Endothelial cell of umbilical vein (primary cell): ENCODE measurements at regions of chr17 and their contacts with region 1.

Region 1: GRCh38 chr17:42221937-42222745 is 27.8 kb upstream of the GHDC start:
- DNase-seq: peak; percentile 77
- H3K4me3 ChIP-seq: no peak overlapping the region
- H3K27ac ChIP-seq: no peak overlapping the region
- H3K4me1 ChIP-seq: peaks cover 1% of the 10 kb centered on the region
- H3K27me3 ChIP-seq: no peaks in the 10 kb centered on the region
- CTCF ChIP-seq: peak; percentile 78 to 86
- POLR2A ChIP-seq: no peak

Region 2: DNA sequence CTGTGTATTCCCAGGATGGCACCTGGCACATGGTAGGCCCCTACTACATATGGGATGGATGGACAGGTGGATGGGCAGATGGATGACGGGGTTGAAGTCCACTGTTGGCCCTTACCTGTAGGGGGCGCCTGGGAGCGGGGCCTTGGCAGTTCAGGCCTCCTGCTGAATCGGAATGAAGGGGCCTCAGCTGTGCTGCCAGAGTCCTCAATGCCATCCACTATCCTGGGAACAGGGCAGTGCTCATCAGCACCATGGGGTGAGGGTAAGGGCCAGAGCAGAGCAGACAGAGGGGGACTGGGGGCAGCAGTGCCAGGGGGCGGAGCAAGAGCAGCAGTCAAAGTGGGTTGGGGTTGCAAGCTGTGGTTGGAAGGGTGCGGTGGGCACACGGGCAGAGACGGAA is 59.0 kb before region 1 on chr17:
- CTCF ChIA-PET with region 1: no interaction called
- POLR2A ChIA-PET with region 1: no interaction called
- dilution Hi-C with region 1: no loop called
- intact Hi-C with region 1: no loop called
- DNase-seq: no peak
- H3K4me3 ChIP-seq: no peak overlapping the region
- H3K27ac ChIP-seq: no peak overlapping the region
- H3K4me1 ChIP-seq: no peaks in the 10 kb centered on the region
- H3K27me3 ChIP-seq: no peaks in the 10 kb centered on the region
- CTCF ChIP-seq: peak; percentile 47 to 54
- POLR2A ChIP-seq: no peak

Region 3: GRCh38 chr17:42200702-42201101 is 21.4 kb before region 1 on chr17:
- CTCF ChIA-PET with region 1: interaction called, 24 read pairs
- POLR2A ChIA-PET with region 1: no interaction called
- dilution Hi-C with region 1: no loop called
- intact Hi-C with region 1: no loop called
- DNase-seq: no peak
- H3K4me3 ChIP-seq: no peak overlapping the region
- H3K27ac ChIP-seq: no peak overlapping the region
- H3K4me1 ChIP-seq: no peaks in the 10 kb centered on the region
- H3K27me3 ChIP-seq: no peaks in the 10 kb centered on the region
- CTCF ChIP-seq: no peak
- POLR2A ChIP-seq: no peak

Region 4: GRCh38 chr17:42266918-42267778 is 45.0 kb after region 1 on chr17:
- CTCF ChIA-PET with region 1: interaction called, 23 read pairs
- POLR2A ChIA-PET with region 1: no interaction called
- dilution Hi-C with region 1: no loop called
- intact Hi-C with region 1: no loop called
- DNase-seq: no peak
- H3K4me3 ChIP-seq: no peak overlapping the region
- H3K27ac ChIP-seq: no peak overlapping the region
- H3K4me1 ChIP-seq: no peaks in the 10 kb centered on the region
- H3K27me3 ChIP-seq: no peaks in the 10 kb centered on the region
- CTCF ChIP-seq: no peak
- POLR2A ChIP-seq: no peak

Region 5: GRCh38 chr17:42312285-42313130 is 90.4 kb after region 1 on chr17:
- CTCF ChIA-PET with region 1: interaction called, 72 read pairs
- POLR2A ChIA-PET with region 1: interaction called, 7 read pairs
- dilution Hi-C with region 1: no loop called
- intact Hi-C with region 1: loop called (anchors 2 kb)
- DNase-seq: peak; percentile 85
- H3K4me3 ChIP-seq: no peak overlapping the region
- H3K27ac ChIP-seq: no peak overlapping the region
- H3K4me1 ChIP-seq: peaks cover 43% of the 10 kb centered on the region
- H3K27me3 ChIP-seq: no peaks in the 10 kb centered on the region
- CTCF ChIP-seq: peak; percentile 67 to 88
- POLR2A ChIP-seq: no peak

Region 6: DNA sequence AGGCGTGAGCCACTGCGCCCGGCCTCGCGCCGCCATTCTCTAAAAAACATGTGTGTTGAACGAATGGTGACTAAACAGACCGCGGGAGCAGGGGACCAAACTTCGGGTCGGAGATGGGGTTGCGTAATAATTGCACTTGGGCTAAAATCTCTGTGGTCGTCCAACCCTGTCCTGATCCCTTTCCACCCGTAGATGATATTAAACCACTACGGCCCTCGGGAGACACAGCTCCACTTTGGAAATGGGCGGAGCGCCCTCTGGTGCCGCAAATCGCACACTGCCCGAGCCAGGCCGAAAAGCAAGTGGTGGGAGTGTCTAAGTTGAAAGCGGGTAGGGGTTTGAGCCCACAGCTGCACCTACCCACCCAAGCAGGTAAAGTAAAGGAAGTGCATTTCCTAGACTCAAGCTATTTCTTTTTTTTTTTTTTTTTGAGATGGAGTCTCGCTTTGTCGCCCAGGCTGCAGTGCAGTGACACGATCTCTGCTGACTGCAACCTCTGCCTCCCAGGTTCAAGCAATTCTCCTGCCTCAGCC is 183.9 kb after region 1 on chr17:
- CTCF ChIA-PET with region 1: interaction called, 34 read pairs
- POLR2A ChIA-PET with region 1: no interaction called
- dilution Hi-C with region 1: no loop called
- intact Hi-C with region 1: loop called (anchors 5 kb)
- DNase-seq: peak; percentile 80
- H3K4me3 ChIP-seq: no peak overlapping the region
- H3K27ac ChIP-seq: no peak overlapping the region
- H3K4me1 ChIP-seq: peaks cover 58% of the 10 kb centered on the region
- H3K27me3 ChIP-seq: no peaks in the 10 kb centered on the region
- CTCF ChIP-seq: peak; percentile 75 to 85
- POLR2A ChIP-seq: no peak

Region 7: GRCh38 chr17:42577532-42578281 is 355.6 kb after region 1 on chr17 and contains the start of gene PSMC3IP:
- CTCF ChIA-PET with region 1: interaction called, 11 read pairs
- POLR2A ChIA-PET with region 1: no interaction called
- dilution Hi-C with region 1: no loop called
- intact Hi-C with region 1: no loop called
- DNase-seq: peak; percentile 96
- H3K4me3 ChIP-seq: peak within 1 kb of the TSS; percentile 53 to 80 (median 76)
- H3K27ac ChIP-seq: peak within 1 kb of the TSS; percentile 50
- H3K4me1 ChIP-seq: peaks cover 18% of the 10 kb centered on the region
- H3K27me3 ChIP-seq: no peaks in the 10 kb centered on the region
- CTCF ChIP-seq: peak; percentile 55 to 64
- POLR2A ChIP-seq: peak; percentile 69
- total RNA-seq, gene PSMC3IP: 19.3 and 20.8 TPM in 2 replicates